ENCODE measurements at regions of chr12 and their contacts with region 1.

Region 1: GRCh38 chr12:76763743-76764675 is at the start of gene ZDHHC17:
- DNase-seq: peak; percentile 82 to 97 (median 86)

Region 2: DNA sequence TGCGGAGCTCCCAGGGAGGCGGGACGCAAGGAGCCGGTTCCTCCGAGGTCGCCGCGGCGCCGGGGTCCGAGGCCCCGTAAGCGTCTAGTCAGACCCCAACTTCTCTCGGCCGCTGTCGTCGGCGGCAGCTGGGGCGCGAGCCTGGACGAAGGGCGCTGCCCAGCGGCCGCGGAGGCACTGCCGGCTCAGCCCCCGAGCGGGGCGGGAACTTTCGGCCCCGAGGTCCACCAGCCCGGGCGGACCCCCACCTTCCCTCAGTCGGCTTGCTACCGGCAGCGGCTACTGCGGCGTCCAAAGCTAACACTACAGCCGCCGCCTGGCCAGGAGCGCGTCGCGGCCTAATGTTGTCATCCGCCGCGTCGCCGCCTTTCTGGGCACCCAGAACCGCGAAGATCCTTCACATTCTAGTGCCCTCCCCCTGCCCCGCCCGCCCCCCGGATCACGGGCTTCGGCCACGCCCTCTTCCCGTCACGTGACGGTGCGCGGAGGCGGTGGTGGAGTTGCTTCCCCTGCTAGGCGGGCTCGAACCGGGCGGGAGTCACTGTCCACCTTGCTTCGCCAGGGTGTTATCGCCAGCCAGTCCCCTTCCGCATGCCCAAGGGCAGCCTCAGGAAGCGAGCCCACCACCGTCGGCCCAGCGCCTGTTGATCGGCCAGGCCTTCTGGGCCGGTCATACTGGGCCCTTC is 204.5 kb before region 1 on chr12 and contains the start of gene OSBPL8:
- intact Hi-C with region 1: loop called (anchors 10 kb)
- DNase-seq: peak; percentile 94 to 99 (median 97)

Measured in posterior cingulate gyrus (tissue), 11 donors.